Heart right ventricle (tissue), 16 donors: ENCODE measurements at regions of chr14 and their contacts with region 1.

Region 1: GRCh38 chr14:105267820-105268548 is 19.7 kb downstream of the BTBD6 start:
- DNase-seq: no peak
- ATAC-seq: peak in 7 of 8 donors; percentile 48 to 82 (median 69)
- H3K4me3 ChIP-seq: no peak overlapping the region
- H3K27ac ChIP-seq: no peak overlapping the region
- H3K4me1 ChIP-seq: peaks cover 0 to 13% (median 0%) of the 10 kb centered on the region in 9 donors
- H3K27me3 ChIP-seq: no peaks in the 10 kb centered on the region
- CTCF ChIP-seq: peak in 4 of 9 donors; percentile 19 to 39 (median 30)

Region 2: GRCh38 chr14:105123981-105124765 is 143.8 kb before region 1 on chr14:
- intact Hi-C with region 1: no loop called
- DNase-seq: no peak
- ATAC-seq: no peak
- H3K4me3 ChIP-seq: no peak overlapping the region
- H3K27ac ChIP-seq: no peak overlapping the region
- H3K4me1 ChIP-seq: no peaks in the 10 kb centered on the region
- H3K27me3 ChIP-seq: peaks cover 0 to 14% (median 6%) of the 10 kb centered on the region in 7 donors
- CTCF ChIP-seq: no peak

Region 3: GRCh38 chr14:105212541-105213300 is 55.3 kb before region 1 on chr14:
- intact Hi-C with region 1: loop called in 1 of 10 experiments (anchors 10 kb)
- DNase-seq: no peak
- ATAC-seq: no peak
- H3K4me3 ChIP-seq: no peak overlapping the region
- H3K27ac ChIP-seq: no peak overlapping the region
- H3K4me1 ChIP-seq: peaks cover 0 to 2% (median 0%) of the 10 kb centered on the region in 9 donors
- H3K27me3 ChIP-seq: no peaks in the 10 kb centered on the region
- CTCF ChIP-seq: no peak

Region 4: GRCh38 chr14:105248368-105248756 is 19.6 kb before region 1 on chr14 and contains the start of gene BTBD6:
- intact Hi-C with region 1: no loop called
- DNase-seq: peak; percentile 81 to 88
- ATAC-seq: peak; percentile 88 to 96 (median 94)
- H3K4me3 ChIP-seq: peak within 1 kb of the TSS; percentile 37 to 85 (median 62)
- H3K27ac ChIP-seq: peak within 1 kb of the TSS; percentile 73 to 98 (median 90)
- H3K4me1 ChIP-seq: peaks cover 10 to 35% (median 24%) of the 10 kb centered on the region in 9 donors
- H3K27me3 ChIP-seq: no peaks in the 10 kb centered on the region
- CTCF ChIP-seq: peak in 1 of 9 donors; percentile 15
- total RNA-seq, gene BTBD6: 28.1 to 49.7 (median 32.2) TPM